ENCODE measurements at regions of chr12 and their contacts with region 1.

Region 1: GRCh38 chr12:9707864-9708808 is 24.8 kb downstream of the CLECL1 start:
- DNase-seq: peak in 1 of 2 donors; percentile 31
- H3K4me3 ChIP-seq: no peak overlapping the region
- H3K27ac ChIP-seq: no peak overlapping the region
- H3K4me1 ChIP-seq: no peaks in the 10 kb centered on the region
- H3K27me3 ChIP-seq: no peaks in the 10 kb centered on the region
- CTCF ChIP-seq: peak; percentile 60 to 74

Region 2: DNA sequence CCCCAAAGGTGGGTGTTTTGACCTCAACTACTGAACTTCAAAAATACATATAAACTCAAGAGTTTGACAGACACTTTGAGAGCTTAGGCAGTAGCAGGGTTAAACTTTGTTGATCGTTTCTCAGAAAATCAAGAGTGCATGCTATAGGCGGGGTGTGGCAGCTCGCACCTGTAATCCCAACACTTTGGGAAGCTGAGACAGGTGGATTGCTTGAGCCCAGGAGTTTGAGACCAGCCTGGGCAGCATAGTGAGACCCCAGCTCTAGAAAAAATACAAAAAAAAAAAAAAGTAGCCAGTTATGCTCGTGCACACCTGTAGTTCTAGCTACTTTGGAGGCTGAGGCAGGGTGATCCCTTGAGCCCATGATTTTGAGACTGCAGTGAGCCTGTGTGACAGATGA is 1906.7 kb before region 1 on chr12:
- intact Hi-C with region 1: loop called (anchors 5 kb)
- DNase-seq: no peak
- H3K4me3 ChIP-seq: no peak overlapping the region
- H3K27ac ChIP-seq: no peak overlapping the region
- H3K4me1 ChIP-seq: peaks cover 0 to 3% (median 0%) of the 10 kb centered on the region in 4 donors
- H3K27me3 ChIP-seq: no peaks in the 10 kb centered on the region
- CTCF ChIP-seq: no peak

Region 3: GRCh38 chr12:8905546-8905945 is 802.6 kb before region 1 on chr12:
- intact Hi-C with region 1: no loop called
- DNase-seq: no peak
- H3K4me3 ChIP-seq: peak overlapping the region in 1 of 2 donors; percentile 18
- H3K27ac ChIP-seq: no peak overlapping the region
- H3K4me1 ChIP-seq: no peaks in the 10 kb centered on the region
- H3K27me3 ChIP-seq: no peaks in the 10 kb centered on the region
- CTCF ChIP-seq: no peak

Region 4: GRCh38 chr12:9636851-9637206 is 71.3 kb before region 1 on chr12:
- intact Hi-C with region 1: loop called (anchors 5 kb)
- DNase-seq: no peak
- H3K4me3 ChIP-seq: no peak overlapping the region
- H3K27ac ChIP-seq: no peak overlapping the region
- H3K4me1 ChIP-seq: no peaks in the 10 kb centered on the region
- H3K27me3 ChIP-seq: no peaks in the 10 kb centered on the region
- CTCF ChIP-seq: no peak

Region 5: DNA sequence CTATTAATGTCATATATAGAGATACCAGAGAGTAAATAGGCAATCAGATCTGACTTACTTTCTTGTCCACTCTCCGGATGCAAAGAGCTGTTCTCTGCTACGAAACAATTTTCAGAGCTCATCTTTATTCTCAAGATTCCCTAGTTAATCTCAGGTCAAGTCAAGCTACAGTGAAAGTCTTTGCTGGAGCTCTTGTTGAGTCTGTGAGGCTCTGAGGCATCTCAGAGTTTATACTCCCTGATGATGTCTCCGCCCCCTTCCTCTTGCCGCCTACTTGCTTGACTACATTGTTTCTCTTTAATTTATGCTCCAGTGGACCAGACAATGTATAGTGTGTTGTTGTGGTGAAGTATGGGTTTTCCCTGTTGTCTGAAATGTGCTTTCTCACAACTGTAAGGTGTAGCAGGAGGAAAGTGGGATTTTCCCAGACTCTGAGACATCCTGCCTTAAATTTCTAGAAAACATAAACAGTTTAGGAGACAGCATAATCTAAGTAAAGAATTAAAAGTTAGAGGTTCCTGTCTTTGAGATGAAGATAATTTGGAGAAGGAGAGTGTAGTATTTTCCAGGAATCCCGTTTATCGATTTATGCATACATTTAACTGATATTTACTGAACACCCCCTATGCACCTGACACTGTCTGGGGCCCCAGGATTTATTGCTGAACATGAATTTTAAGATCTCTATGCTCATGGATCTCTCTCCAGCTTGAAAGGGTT is 52.7 kb after region 1 on chr12 and contains the start of gene CD69:
- intact Hi-C with region 1: no loop called
- DNase-seq: no peak
- H3K4me3 ChIP-seq: no peak within 1 kb of the TSS
- H3K27ac ChIP-seq: no peak within 1 kb of the TSS
- H3K4me1 ChIP-seq: no peaks in the 10 kb centered on the region
- H3K27me3 ChIP-seq: no peaks in the 10 kb centered on the region
- CTCF ChIP-seq: no peak